Activated naive CD8-positive, alpha-beta T cell treated with anti-CD3 and anti-CD28 coated beads, Interleukin-2, amount 10 ng/mL, durations not matched to agents 7 days and 5 days (primary cell): ENCODE measurements at regions of chr19 and their contacts with region 1.

Region 1: GRCh38 chr19:47273313-47273977 is 1.2 kb upstream of the INAFM1 start:
- DNase-seq: peak; percentile 92
- ATAC-seq: peak; percentile 74
- H3K4me3 Mint-ChIP-seq: peak overlapping the region; percentile 98
- H3K27ac Mint-ChIP-seq: peak overlapping the region; percentile 98
- H3K4me1 Mint-ChIP-seq: peaks cover 13% of the 10 kb centered on the region
- H3K27me3 Mint-ChIP-seq: no peaks in the 10 kb centered on the region

Region 2: DNA sequence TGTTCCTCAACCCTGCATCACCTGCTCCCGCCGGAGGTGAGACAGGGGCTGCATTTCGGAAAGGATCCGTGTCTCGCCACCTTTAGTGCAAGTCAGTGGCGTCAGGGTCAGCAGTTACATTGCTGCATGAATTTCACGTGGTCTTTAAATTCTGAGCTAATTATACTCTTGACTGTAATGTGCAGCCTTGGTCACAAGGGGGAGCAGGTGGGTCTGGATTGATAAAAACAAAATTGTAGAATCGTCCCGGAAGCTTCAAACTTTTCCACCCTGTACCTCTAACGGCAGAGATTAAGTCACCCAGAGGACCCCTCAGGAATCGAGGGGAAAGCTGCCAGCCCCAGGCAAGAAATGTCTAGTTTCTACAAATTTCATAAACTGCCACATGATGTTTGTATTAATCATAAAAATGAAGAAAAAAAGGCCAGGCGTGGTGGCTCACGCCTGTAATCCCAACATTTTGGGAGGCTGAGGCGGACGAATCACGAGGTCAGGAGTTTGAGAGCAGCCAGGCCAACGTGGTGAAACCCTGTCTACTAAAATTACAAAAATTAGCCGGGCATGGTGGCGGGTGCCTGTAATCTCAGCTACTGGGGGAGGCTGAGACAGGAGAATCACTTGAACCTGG is 62.6 kb before region 1 on chr19:
- POLR2A ChIA-PET with region 1: interaction called, 10 read pairs
- DNase-seq: peak; percentile 66
- ATAC-seq: peak; percentile 77
- H3K4me3 Mint-ChIP-seq: peak overlapping the region; percentile 21
- H3K27ac Mint-ChIP-seq: peak overlapping the region; percentile 96
- H3K4me1 Mint-ChIP-seq: peaks cover 10% of the 10 kb centered on the region
- H3K27me3 Mint-ChIP-seq: no peaks in the 10 kb centered on the region

Region 3: GRCh38 chr19:47256688-47257443 is 16.6 kb before region 1 on chr19:
- POLR2A ChIA-PET with region 1: interaction called, 63 read pairs
- DNase-seq: peak; percentile 100
- ATAC-seq: peak; percentile 90
- H3K4me3 Mint-ChIP-seq: peak overlapping the region; percentile 97
- H3K27ac Mint-ChIP-seq: peak overlapping the region; percentile 96
- H3K4me1 Mint-ChIP-seq: peaks cover 29% of the 10 kb centered on the region
- H3K27me3 Mint-ChIP-seq: no peaks in the 10 kb centered on the region

Region 4: DNA sequence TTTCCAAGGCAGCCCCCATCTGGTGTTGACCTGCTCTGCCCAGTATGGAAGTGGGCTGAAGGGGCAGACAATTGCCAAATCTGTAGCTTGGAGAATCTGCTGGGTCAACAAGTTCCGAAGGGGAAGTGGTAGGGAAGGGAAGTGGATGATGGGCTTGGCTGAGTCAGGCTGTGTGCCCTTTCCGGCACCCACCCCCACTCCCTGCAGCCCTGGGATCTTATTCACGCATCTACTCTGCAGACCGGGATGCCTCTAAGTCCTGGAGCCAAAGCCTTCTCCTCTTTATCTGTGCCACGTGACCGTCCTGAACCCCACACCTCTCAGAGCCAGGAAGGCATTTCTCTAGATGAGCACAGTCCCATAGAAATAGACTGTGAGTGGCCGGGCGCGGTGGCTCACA is 51.1 kb after region 1 on chr19:
- POLR2A ChIA-PET with region 1: no interaction called
- DNase-seq: no peak
- ATAC-seq: no peak
- H3K4me3 Mint-ChIP-seq: no peak overlapping the region
- H3K27ac Mint-ChIP-seq: no peak overlapping the region
- H3K4me1 Mint-ChIP-seq: peaks cover 3% of the 10 kb centered on the region
- H3K27me3 Mint-ChIP-seq: peaks cover 11% of the 10 kb centered on the region

Region 5: GRCh38 chr19:47428177-47428894 is 154.9 kb after region 1 on chr19:
- POLR2A ChIA-PET with region 1: interaction called, 14 read pairs
- DNase-seq: peak; percentile 86
- ATAC-seq: peak; percentile 84
- H3K4me3 Mint-ChIP-seq: no peak overlapping the region
- H3K27ac Mint-ChIP-seq: no peak overlapping the region
- H3K4me1 Mint-ChIP-seq: peaks cover 22% of the 10 kb centered on the region
- H3K27me3 Mint-ChIP-seq: peaks cover 31% of the 10 kb centered on the region